Transverse colon (tissue), 4 donors: ENCODE measurements at regions of chr2 and their contacts with region 1.

Region 1: DNA sequence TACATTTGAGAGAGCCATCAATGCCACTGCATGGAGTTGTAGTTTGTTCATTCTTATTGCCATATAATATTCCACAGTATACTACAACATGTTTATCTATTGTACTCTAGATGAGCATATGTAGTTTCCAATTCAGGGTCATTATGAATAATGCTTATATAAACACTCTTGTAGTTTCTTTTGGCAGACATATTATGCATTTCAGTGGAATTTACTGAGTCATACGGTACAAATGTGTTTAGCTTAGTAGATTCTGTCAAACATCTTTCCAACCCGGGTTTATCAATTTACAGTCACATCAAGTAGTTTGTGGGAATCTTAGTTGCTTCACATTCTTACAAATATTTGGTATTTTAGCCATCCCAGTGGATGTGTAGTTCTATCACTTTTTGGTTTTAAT is 161.1 kb downstream of the KCNH7 start:
- DNase-seq: no peak
- H3K4me3 ChIP-seq: no peak overlapping the region
- H3K27ac ChIP-seq: no peak overlapping the region
- H3K4me1 ChIP-seq: no peaks in the 10 kb centered on the region
- H3K27me3 ChIP-seq: no peaks in the 10 kb centered on the region
- CTCF ChIP-seq: no peak
- EP300 ChIP-seq: no peak
- POLR2A ChIP-seq: no peak

Region 2: GRCh38 chr2:163884416-163884815 is 1206.9 kb after region 1 on chr2:
- in situ Hi-C with region 1: no loop called
- intact Hi-C with region 1: loop called (anchors 5 kb)
- DNase-seq: no peak
- H3K4me3 ChIP-seq: no peak overlapping the region
- H3K27ac ChIP-seq: no peak overlapping the region
- H3K4me1 ChIP-seq: no peaks in the 10 kb centered on the region
- H3K27me3 ChIP-seq: no peaks in the 10 kb centered on the region
- CTCF ChIP-seq: no peak
- EP300 ChIP-seq: no peak
- POLR2A ChIP-seq: no peak